ENCODE measurements at regions of chr2 and their contacts with region 1.

Region 1: GRCh38 chr2:158024288-158024898 is 77.3 kb upstream of the UPP2 start:
- DNase-seq: no peak
- H3K4me3 ChIP-seq: no peak overlapping the region
- CTCF ChIP-seq: peak; percentile 69

Region 2: DNA sequence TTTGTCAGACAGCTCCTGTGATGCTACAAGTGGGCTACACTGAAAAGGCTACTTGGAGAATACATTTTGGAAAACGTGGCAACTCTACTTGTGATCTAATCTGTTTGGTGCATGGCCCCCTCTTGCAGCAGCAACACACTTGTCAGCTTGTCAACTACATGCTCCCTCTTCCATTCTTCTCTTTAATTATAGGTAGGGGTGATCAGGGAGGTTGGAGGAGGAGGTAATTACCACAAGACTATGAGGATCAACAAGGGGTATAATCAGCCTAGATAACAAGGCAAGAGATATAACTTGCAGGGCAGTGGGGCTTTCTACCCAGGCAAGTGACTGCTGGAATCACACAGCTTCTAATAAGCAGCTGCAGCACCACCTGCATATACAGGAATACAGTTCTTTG is 253.2 kb before region 1 on chr2:
- CTCF ChIA-PET with region 1: interaction called, 23 read pairs
- POLR2A ChIA-PET with region 1: no interaction called
- DNase-seq: no peak
- H3K4me3 ChIP-seq: no peak overlapping the region
- CTCF ChIP-seq: no peak

Region 3: DNA sequence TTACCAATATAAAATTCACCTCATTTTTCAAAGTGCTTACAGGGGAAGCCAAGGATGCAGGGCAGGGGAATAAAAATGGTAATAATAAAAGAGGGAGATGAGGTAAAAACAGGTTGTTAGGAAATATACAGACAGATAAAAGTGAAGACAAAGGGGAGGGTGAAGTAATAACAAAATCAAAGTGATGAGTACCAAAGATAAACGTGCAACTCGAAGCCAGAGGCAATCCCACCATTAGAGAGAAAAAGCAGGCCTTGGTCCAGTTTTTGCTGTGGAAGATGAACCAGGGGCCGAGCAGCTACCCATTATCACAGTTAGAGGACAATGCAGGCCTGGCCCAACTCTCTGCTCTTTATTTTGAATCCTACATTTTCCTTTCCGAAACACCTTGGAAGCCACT is 22.3 kb before region 1 on chr2:
- CTCF ChIA-PET with region 1: interaction called, 12 read pairs
- POLR2A ChIA-PET with region 1: no interaction called
- DNase-seq: no peak
- H3K4me3 ChIP-seq: no peak overlapping the region
- CTCF ChIP-seq: no peak

Region 4: DNA sequence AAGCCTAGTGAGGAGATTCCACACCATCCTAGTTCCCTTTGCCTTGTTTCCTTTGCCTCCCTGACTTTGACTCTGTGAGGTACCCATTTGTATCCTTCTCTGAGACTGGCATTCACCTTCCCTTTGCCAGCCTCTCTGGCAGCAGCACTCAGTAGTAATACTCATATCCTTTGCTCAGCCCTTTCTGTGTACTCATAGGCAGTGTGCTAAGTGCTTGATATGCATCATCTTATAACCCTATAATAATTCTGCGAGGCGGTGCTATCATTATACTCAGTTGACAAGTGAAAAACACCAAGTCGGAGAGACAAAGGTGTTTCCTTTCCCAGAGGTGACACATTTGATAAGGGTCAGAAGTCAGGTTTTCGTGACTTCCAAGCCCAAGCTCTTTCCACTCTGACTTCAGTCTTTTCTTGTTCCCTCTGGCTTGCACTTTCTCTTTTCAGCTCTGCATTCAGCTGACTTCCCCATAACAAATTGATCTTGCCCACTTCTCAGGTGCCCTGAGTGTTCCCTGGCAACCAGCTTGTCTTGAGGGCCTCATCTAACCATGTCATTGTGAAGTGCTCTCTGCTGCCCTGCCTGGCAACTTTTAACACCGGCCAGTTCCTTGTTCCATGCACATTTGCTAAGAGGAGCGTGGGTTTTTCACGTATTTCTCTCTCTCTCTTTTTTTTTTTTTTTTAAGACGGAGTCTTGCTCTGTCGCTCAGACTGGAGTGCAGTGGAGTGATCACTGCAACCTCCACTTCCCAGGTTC is 17.3 kb before region 1 on chr2:
- CTCF ChIA-PET with region 1: interaction called, 51 read pairs
- POLR2A ChIA-PET with region 1: no interaction called
- DNase-seq: no peak
- H3K4me3 ChIP-seq: no peak overlapping the region
- CTCF ChIP-seq: no peak

Region 5: GRCh38 chr2:158060862-158061435 is 36.6 kb after region 1 on chr2:
- CTCF ChIA-PET with region 1: no interaction called
- POLR2A ChIA-PET with region 1: no interaction called
- DNase-seq: no peak
- H3K4me3 ChIP-seq: no peak overlapping the region
- CTCF ChIP-seq: no peak

Measured in AG04449 (cell line).